ENCODE measurements at regions of chr9 and their contacts with region 1.

Region 1: GRCh38 chr9:35696525-35697215 is 6.9 kb upstream of the TPM2 start:
- DNase-seq: peak; percentile 34 to 78 (median 60)
- ATAC-seq: peak; percentile 97
- H3K4me3 ChIP-seq: no peak overlapping the region
- H3K4me3 Mint-ChIP-seq: no peak overlapping the region
- H3K27ac ChIP-seq: peak overlapping the region in 1 of 2 experiments; percentile 22
- H3K27ac Mint-ChIP-seq: peak overlapping the region; percentile 62
- H3K4me1 ChIP-seq: no peaks in the 10 kb centered on the region
- H3K4me1 Mint-ChIP-seq: peaks cover 6% of the 10 kb centered on the region
- H3K27me3 ChIP-seq: no peaks in the 10 kb centered on the region
- H3K27me3 Mint-ChIP-seq: no peaks in the 10 kb centered on the region
- CTCF ChIP-seq: peak; percentile 83

Region 2: DNA sequence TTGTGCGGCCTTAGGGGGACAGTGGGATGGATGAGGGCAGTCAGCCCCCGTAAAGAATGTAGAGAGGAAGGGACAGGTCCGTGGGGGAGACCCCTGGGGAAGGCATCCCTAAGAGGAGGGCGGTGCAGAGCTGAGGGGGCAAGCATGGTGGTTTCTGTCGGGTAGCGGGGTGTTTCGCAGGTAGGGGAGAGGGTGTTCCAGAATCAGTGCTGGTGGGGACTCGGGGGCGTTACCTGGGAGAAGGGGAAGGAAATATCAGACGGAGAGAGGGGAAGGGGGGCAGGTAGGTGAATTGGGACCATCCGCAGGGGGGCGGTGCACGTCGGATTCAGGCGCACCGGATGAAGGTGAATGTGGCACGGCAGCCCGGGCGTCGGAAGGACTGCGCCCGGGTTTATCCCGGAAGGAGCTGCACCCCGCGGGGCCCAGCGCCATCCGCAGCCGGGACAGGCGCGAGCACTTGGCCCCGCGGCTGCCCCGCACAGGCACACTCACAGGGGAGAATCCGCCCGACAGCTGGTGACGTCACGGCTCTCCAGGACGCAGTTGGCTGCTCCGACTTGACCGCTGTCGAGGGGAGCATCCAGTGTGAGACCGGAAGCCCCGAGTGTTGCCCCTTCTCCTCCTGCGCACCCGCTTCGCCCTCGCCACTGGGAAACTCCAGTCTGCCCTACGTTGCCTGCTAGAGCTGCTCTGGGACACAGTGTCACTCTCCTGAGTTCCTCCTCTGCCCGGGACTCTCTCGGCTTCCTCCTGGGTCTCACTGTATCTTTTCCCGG is 79.8 kb before region 1 on chr9:
- CTCF ChIA-PET with region 1: interaction called, 147 read pairs
- POLR2A ChIA-PET with region 1: interaction called, 3 read pairs
- intact Hi-C with region 1: loop called in 1 of 2 experiments (anchors 1 kb)
- DNase-seq: peak; percentile 22 to 92 (median 73)
- ATAC-seq: peak; percentile 74
- H3K4me3 ChIP-seq: peak overlapping the region; percentile 44 to 60
- H3K4me3 Mint-ChIP-seq: peak overlapping the region; percentile 85
- H3K27ac ChIP-seq: peak overlapping the region; percentile 36 to 93
- H3K27ac Mint-ChIP-seq: peak overlapping the region; percentile 92
- H3K4me1 ChIP-seq: peaks cover 34% of the 10 kb centered on the region
- H3K4me1 Mint-ChIP-seq: peaks cover 39% of the 10 kb centered on the region
- H3K27me3 ChIP-seq: no peaks in the 10 kb centered on the region
- H3K27me3 Mint-ChIP-seq: no peaks in the 10 kb centered on the region
- CTCF ChIP-seq: peak; percentile 22

Region 3: GRCh38 chr9:35675732-35676392 is 20.8 kb before region 1 on chr9:
- CTCF ChIA-PET with region 1: interaction called, 29 read pairs
- POLR2A ChIA-PET with region 1: interaction called, 5 read pairs
- intact Hi-C with region 1: no loop called
- DNase-seq: peak in 5 of 9 experiments; percentile 32 to 66 (median 43)
- ATAC-seq: peak; percentile 61
- H3K4me3 ChIP-seq: peak overlapping the region; percentile 50 to 62
- H3K4me3 Mint-ChIP-seq: peak overlapping the region; percentile 78
- H3K27ac ChIP-seq: no peak overlapping the region
- H3K27ac Mint-ChIP-seq: no peak overlapping the region
- H3K4me1 ChIP-seq: peaks cover 12% of the 10 kb centered on the region
- H3K4me1 Mint-ChIP-seq: peaks cover 18% of the 10 kb centered on the region
- H3K27me3 ChIP-seq: no peaks in the 10 kb centered on the region
- H3K27me3 Mint-ChIP-seq: peaks cover 5% of the 10 kb centered on the region
- CTCF ChIP-seq: no peak

Region 4: DNA sequence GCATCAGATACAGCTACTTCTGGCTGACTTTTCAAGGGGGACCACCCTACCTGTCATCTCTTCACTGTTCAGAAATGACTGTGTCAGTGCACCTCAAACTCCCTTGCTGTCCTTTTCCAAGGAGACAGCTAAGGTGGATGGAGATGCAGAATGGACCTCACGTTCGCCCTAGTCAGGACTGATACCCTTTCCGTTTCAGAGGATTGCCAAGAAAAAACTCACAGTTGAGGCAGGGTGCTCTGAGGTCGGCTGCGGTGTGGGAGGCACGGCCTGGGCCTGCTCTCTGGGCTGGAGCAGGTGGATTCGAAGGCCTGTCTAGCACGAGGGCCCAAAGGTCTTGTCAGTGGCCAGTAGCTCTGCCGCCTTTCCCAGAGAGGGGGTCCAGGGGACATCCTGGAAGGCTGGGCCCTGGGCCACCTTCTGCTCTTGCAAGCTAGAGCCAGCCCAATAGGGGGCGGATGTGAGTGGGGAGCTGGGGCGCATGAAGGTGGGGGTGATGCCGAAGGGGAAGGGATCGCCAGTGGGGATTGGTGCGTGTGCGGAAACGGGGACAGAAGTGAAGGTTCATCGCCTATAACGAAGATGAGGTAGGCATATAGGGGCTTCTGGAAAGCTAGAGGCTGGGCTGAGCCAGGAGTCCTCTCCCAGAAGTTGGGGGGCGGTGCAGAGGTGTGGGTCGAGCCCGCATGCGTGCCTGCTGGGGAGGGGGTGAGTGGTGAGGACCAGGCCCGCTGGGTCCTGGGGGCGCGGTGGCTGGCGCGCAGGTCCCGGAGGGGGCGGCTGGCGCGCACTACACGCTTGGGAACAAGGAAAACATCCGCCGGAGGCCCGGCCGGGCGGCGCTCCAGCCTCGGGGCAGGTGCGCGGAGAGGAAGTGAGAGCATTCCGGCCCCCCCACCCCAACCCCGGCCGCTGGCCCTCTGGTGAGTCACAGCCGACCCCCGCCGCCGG is 59.9 kb after region 1 on chr9:
- CTCF ChIA-PET with region 1: interaction called, 10 read pairs
- POLR2A ChIA-PET with region 1: no interaction called
- intact Hi-C with region 1: no loop called
- DNase-seq: peak; percentile 49 to 87 (median 80)
- ATAC-seq: peak; percentile 97
- H3K4me3 ChIP-seq: peak overlapping the region; percentile 75 to 98
- H3K4me3 Mint-ChIP-seq: peak overlapping the region; percentile 91
- H3K27ac ChIP-seq: peak overlapping the region; percentile 72 to 83
- H3K27ac Mint-ChIP-seq: peak overlapping the region; percentile 91
- H3K4me1 ChIP-seq: peaks cover 18% of the 10 kb centered on the region
- H3K4me1 Mint-ChIP-seq: peaks cover 52% of the 10 kb centered on the region
- H3K27me3 ChIP-seq: no peaks in the 10 kb centered on the region
- H3K27me3 Mint-ChIP-seq: no peaks in the 10 kb centered on the region
- CTCF ChIP-seq: peak; percentile 67

Region 5: DNA sequence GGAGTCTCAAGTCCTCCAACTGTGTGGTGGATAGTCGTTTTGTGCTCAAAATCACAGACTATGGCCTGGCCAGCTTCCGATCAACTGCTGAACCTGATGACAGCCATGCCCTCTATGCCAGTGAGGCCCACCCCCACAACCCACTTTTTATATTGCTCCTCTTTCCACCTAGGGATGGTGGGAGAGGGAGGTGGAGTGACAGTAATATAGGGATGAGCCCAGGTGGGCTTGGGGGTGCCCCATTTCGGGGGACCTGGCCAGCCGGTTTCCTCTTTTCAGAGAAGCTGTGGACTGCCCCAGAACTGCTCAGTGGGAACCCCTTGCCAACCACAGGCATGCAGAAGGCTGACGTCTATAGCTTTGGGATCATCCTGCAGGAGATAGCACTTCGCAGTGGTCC is 108.9 kb after region 1 on chr9:
- CTCF ChIA-PET with region 1: no interaction called
- POLR2A ChIA-PET with region 1: no interaction called
- intact Hi-C with region 1: no loop called
- DNase-seq: no peak
- ATAC-seq: no peak
- H3K4me3 ChIP-seq: no peak overlapping the region
- H3K4me3 Mint-ChIP-seq: no peak overlapping the region
- H3K27ac ChIP-seq: no peak overlapping the region
- H3K27ac Mint-ChIP-seq: no peak overlapping the region
- H3K4me1 ChIP-seq: no peaks in the 10 kb centered on the region
- H3K4me1 Mint-ChIP-seq: peaks cover 4% of the 10 kb centered on the region
- H3K27me3 ChIP-seq: no peaks in the 10 kb centered on the region
- H3K27me3 Mint-ChIP-seq: no peaks in the 10 kb centered on the region
- CTCF ChIP-seq: no peak

Region 6: DNA sequence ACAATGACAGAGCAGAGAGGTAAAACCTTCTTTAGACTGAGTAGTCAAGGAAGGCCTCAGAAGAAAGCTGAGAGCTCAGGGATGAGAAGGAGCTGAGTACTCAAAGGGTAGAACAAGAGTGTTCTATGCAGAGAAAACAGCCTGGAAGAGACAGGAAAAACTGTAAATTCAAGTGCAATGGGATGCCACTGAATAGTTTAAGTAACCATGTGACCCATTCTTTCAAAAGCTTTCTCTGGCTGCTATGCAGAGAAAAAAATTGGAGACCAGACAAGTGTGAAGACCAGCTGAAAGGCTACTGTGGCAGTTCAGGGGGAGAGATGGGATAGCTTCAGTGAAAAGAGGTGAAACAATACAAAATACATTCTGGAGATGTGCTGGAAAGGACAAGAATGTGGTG is 764.7 kb after region 1 on chr9:
- CTCF ChIA-PET with region 1: no interaction called
- POLR2A ChIA-PET with region 1: no interaction called
- intact Hi-C with region 1: no loop called
- DNase-seq: peak in 1 of 9 experiments; percentile 30
- ATAC-seq: no peak
- H3K4me3 ChIP-seq: no peak overlapping the region
- H3K4me3 Mint-ChIP-seq: no peak overlapping the region
- H3K27ac ChIP-seq: peak overlapping the region in 1 of 2 experiments; percentile 33
- H3K27ac Mint-ChIP-seq: peak overlapping the region; percentile 73
- H3K4me1 ChIP-seq: peaks cover 19% of the 10 kb centered on the region
- H3K4me1 Mint-ChIP-seq: peaks cover 57% of the 10 kb centered on the region
- H3K27me3 ChIP-seq: no peaks in the 10 kb centered on the region
- H3K27me3 Mint-ChIP-seq: no peaks in the 10 kb centered on the region
- CTCF ChIP-seq: no peak

Measured in CD8-positive, alpha-beta T cell (primary cell).